ENCODE measurements at regions of chr22 and their contacts with region 1.

Region 1: GRCh38 chr22:20885557-20886323 is 26.9 kb downstream of the SNAP29 start:
- DNase-seq: peak; percentile 80
- H3K4me3 Mint-ChIP-seq: no peak overlapping the region
- H3K27ac Mint-ChIP-seq: peak overlapping the region; percentile 52
- H3K4me1 Mint-ChIP-seq: peaks cover 10% of the 10 kb centered on the region
- H3K27me3 Mint-ChIP-seq: no peaks in the 10 kb centered on the region
- CTCF ChIP-seq: peak; percentile 95

Region 2: GRCh38 chr22:20867179-20868024 is 18.3 kb before region 1 on chr22:
- CTCF ChIA-PET with region 1: interaction called, 17 read pairs
- POLR2A ChIA-PET with region 1: interaction called, 5 read pairs
- intact Hi-C with region 1: no loop called
- DNase-seq: no peak
- H3K4me3 Mint-ChIP-seq: no peak overlapping the region
- H3K27ac Mint-ChIP-seq: peak overlapping the region; percentile 27
- H3K4me1 Mint-ChIP-seq: peaks cover 9% of the 10 kb centered on the region
- H3K27me3 Mint-ChIP-seq: no peaks in the 10 kb centered on the region
- CTCF ChIP-seq: no peak

Region 3: DNA sequence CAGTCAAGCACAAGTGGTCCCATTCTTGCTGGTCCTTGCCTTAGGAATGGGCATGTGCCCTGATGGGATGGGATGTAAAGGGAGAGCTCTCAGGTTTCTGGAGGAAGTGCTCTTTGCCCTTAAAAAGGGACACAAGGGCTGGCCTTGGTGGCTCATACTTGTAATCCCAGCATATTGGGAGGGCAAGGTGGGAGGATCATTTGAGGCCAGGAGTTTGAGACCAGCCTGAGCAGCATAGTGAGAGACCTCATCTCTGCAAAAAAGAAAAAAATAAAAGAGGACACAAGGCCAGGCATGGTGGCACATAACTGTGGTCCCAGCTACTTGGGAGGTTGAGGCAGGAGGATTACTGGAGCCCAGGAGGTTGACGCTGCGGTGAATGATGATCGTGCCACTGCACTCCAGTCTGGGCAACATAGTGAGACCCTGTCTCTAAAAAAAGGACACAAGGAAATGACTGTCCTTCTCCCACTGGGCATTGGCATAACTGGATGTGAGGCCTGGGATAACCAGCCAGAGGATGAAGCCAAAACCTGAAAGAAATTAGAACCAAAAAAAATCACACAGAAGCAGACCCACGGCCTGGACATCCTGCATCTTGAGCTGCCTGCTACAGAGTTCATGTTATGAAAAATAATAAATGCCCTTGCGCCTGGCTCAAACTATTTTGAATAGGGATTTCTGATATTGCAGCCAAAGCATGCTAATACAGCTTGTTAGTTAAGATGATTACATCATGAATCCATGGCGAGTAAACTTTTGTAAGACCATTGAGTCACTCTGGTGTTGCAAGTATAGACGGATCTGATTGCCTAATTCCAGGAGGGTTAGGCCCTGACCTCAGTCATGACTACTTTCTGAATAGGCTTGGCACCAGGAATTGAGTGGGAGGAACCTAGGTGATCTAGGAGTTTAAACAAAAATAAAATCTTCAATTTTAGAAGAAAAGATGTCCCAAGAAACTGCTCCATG is 18.6 kb after region 1 on chr22:
- CTCF ChIA-PET with region 1: interaction called, 27 read pairs
- POLR2A ChIA-PET with region 1: interaction called, 14 read pairs
- intact Hi-C with region 1: no loop called
- DNase-seq: peak; percentile 98
- H3K4me3 Mint-ChIP-seq: peak overlapping the region; percentile 52
- H3K27ac Mint-ChIP-seq: peak overlapping the region; percentile 95
- H3K4me1 Mint-ChIP-seq: peaks cover 15% of the 10 kb centered on the region
- H3K27me3 Mint-ChIP-seq: no peaks in the 10 kb centered on the region
- CTCF ChIP-seq: no peak

Region 4: DNA sequence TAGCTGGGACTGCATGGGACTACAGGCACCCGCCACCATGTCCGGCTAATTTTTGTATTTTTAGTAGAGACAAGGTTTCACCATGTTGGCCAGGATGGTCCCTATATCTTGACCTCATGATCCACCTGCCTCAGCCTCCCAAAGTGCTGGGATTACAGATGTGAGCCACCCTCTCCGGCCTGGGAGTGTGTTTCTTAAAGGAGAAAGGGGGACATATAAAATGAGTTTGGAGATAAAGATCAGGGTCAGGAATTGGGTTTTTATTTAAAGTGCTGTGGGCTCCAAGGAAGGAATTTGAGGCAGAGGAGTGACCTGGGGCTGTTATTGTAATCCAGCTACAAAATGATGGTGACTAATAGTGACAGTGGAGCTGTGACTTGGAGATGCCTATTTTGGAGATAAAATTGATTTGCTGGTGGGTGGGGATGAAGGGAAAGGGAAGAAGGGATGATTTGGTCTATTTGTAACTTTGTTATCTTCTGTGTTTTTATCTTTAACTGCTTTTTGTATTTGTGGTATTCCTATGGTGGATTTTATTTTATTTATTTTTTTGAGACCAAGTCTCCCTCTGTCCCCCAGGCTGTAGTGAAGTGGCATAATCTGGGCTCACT is 36.5 kb after region 1 on chr22:
- CTCF ChIA-PET with region 1: interaction called, 14 read pairs
- POLR2A ChIA-PET with region 1: interaction called, 12 read pairs
- intact Hi-C with region 1: loop called (anchors 1 kb)
- DNase-seq: no peak
- H3K4me3 Mint-ChIP-seq: peak overlapping the region; percentile 68
- H3K27ac Mint-ChIP-seq: no peak overlapping the region
- H3K4me1 Mint-ChIP-seq: peaks cover 42% of the 10 kb centered on the region
- H3K27me3 Mint-ChIP-seq: no peaks in the 10 kb centered on the region
- CTCF ChIP-seq: no peak

Region 5: DNA sequence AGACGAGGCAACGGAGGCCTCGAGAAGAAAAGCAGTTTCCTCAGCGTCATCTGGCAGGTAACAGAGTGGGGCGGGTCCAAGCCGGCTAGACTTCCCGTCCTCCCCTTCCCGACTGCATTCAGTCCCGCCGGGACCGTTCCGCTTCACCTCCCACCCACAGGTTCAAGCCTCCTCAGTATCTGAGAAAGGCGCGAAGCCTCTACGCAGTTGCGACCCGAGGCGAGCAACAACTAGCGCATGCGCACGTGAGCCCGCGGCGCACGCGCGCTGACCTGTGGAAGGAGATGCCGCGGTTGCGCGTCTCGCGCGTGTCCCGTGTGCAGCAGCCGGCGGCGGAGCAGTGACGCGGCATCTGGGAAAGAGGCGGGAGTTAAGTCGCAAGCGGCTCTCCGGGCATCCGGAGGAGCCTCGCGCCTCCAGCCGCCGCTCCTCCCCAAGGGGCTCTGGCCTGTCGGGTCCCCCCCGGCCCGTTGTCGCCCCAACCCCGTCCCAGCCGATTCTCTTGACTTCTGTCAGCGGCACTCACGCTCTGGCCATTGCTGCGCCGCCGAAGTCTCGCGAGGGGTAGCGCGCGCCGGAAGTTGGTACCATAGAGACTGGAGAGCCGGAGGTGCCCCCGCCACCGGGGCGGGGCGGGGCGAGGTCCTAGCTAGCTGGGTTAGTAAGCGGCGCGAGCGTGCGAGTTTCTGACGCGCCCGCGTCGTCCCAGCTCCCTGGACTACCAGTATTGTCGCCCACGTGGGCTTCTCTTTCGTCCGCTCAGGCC is 116.0 kb after region 1 on chr22 and contains the start of gene THAP7:
- CTCF ChIA-PET with region 1: interaction called, 12 read pairs
- POLR2A ChIA-PET with region 1: interaction called, 13 read pairs
- intact Hi-C with region 1: loop called (anchors 5 kb)
- DNase-seq: peak; percentile 94
- H3K4me3 Mint-ChIP-seq: peak within 1 kb of the TSS; percentile 87
- H3K27ac Mint-ChIP-seq: peak within 1 kb of the TSS; percentile 98
- H3K4me1 Mint-ChIP-seq: peaks cover 10% of the 10 kb centered on the region
- H3K27me3 Mint-ChIP-seq: no peaks in the 10 kb centered on the region
- CTCF ChIP-seq: no peak
- total RNA-seq, gene THAP7: 20.6 and 24.9 TPM in 2 replicates